ENCODE measurements at regions of chr4 and their contacts with region 1.

Region 1: DNA sequence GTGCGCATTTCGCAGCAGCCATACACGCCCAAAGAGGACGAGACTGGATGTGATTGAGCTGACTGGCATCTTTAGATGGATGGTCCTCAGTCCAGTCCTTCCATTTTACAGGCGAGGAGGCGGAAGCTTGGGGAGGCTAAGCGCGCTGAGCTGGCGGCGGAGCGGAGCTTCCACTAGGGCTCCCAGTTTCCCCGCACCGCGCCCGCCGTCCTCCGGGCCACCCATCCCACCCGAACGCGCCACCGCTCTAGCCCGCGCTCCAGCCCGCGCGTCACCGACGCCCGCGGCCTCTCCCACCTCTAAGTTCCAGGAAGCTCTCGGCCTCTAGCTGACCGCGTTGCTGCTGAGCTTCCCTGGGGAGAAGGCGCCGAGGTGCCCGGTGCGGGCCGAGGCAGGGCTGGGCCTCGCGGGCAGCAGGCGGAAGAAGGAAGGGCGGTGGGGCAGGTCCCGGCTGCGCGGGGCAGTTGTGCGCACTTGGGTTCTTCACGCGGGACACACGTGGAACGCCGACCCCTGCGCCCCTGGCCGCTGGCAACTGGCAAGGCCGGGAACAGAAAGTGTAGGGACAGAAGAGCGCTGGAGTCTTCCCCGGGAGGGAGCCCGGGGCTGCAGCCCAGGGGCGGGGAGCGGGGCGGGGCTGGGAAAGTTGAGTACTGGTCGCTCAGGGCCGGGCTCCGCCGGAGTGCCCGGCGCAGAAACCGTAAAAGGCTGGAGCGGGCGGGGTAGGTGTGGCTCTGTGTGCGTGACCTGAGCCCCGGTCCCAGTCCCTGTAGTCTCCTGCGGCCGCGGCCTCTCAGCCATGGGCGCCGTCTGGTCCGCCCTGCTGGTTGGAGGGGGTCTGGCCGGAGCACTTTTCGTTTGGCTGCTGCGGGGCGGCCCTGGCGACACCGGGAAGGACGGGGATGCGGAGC is at the start of gene STBD1:
- DNase-seq: peak; percentile 49
- ATAC-seq: peak; percentile 83
- H3K4me3 ChIP-seq: peak within 1 kb of the TSS; percentile 82
- H3K27ac ChIP-seq: peak within 1 kb of the TSS; percentile 74
- H3K4me1 ChIP-seq: peaks cover 10% of the 10 kb centered on the region; the same call in 1 of the 2 replicates
- H3K27me3 ChIP-seq: no peaks in the 10 kb centered on the region
- CTCF ChIP-seq: no peak
- POLR2A ChIP-seq: no peak
- RAD21 ChIP-seq: no peak
- total RNA-seq, gene STBD1: 2.2 and 3.0 TPM in 2 replicates

Region 2: GRCh38 chr4:76213415-76214176 is 92.6 kb before region 1 on chr4 and contains the start of gene SCARB2:
- CTCF ChIA-PET with region 1: no interaction called
- POLR2A ChIA-PET with region 1: no interaction called
- dilution Hi-C with region 1: no loop called
- in situ Hi-C with region 1: no loop called
- intact Hi-C with region 1: loop called (anchors 2 kb)
- DNase-seq: peak; percentile 84
- ATAC-seq: peak; percentile 93
- H3K4me3 ChIP-seq: peak within 1 kb of the TSS; percentile 87
- H3K27ac ChIP-seq: peak within 1 kb of the TSS; percentile 91
- H3K4me1 ChIP-seq: peaks cover 11% of the 10 kb centered on the region
- H3K27me3 ChIP-seq: no peaks in the 10 kb centered on the region
- CTCF ChIP-seq: no peak
- POLR2A ChIP-seq: peak; percentile 63
- RAD21 ChIP-seq: no peak
- total RNA-seq, gene SCARB2: 89.7 and 102 TPM in 2 replicates

Region 3: DNA sequence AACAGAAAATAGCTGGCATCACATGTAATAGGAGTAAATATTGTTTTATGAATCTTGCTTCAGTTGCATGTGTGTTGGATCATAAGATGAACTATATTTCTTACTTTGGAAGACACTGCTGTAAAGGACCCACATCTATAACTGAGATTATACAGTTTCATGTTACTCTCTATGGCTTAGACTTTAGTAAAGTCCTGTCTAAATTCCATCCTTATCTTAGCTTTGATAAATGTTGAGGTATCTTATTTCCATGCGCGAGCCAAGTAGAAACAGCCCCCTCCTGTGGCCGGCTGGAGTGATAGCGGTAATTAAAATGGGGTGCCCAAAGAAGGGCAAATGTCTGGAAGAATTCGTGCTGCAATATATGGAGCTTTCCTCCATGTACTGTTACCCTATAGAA is 71.7 kb after region 1 on chr4:
- CTCF ChIA-PET with region 1: interaction called, 5 read pairs
- POLR2A ChIA-PET with region 1: no interaction called
- dilution Hi-C with region 1: no loop called
- in situ Hi-C with region 1: no loop called
- intact Hi-C with region 1: loop called (anchors 2 kb)
- DNase-seq: peak; percentile 61
- ATAC-seq: peak; percentile 79
- H3K4me3 ChIP-seq: no peak overlapping the region
- H3K27ac ChIP-seq: no peak overlapping the region
- H3K4me1 ChIP-seq: no peaks in the 10 kb centered on the region
- H3K27me3 ChIP-seq: peaks cover 8% of the 10 kb centered on the region
- CTCF ChIP-seq: peak; percentile 69
- POLR2A ChIP-seq: no peak
- RAD21 ChIP-seq: peak; percentile 61

Measured in IMR-90 (cell line).